ENCODE measurements at regions of chr12 and their contacts with region 1.

Region 1: DNA sequence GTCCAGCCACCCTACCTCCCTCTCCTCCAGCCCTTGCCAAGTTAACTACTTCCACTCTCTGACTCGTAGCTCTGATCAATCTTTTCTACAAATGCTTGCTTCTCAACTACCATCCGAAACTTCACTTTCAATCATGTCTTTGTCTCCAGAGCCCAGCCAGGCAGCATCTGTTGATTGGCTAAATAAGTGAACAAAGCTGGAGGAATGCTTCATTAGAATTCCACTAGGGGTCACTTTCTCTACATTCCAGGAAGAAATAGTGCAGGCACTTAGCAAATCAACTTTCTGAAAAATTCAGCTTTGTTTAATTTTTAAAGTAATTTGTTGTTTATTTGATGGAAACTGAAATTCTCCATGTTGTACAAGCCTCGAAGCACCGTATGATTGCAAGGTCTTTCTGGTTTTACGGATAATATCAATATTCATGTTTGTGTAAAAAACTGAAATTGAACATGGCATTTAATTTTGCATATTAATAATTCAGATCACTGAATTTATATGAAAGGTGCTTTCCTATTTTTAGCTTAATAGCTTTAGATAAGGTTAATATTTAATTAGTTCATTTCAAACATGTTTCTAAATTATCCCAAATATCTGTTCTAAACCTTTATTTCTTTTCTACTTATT is 32.4 kb upstream of the HELB start:
- DNase-seq: no peak
- H3K4me3 ChIP-seq: no peak overlapping the region
- H3K27ac ChIP-seq: no peak overlapping the region
- H3K4me1 ChIP-seq: no peaks in the 10 kb centered on the region
- H3K27me3 ChIP-seq: no peaks in the 10 kb centered on the region
- CTCF ChIP-seq: peak; percentile 52 to 66 (median 60)
- EP300 ChIP-seq: no peak
- POLR2A ChIP-seq: no peak

Region 2: GRCh38 chr12:66417217-66417616 is 147.3 kb after region 1 on chr12:
- in situ Hi-C with region 1: loop called in 1 of 4 experiments (anchors 10 kb)
- intact Hi-C with region 1: no loop called
- DNase-seq: no peak
- H3K4me3 ChIP-seq: no peak overlapping the region
- H3K27ac ChIP-seq: no peak overlapping the region
- H3K4me1 ChIP-seq: no peaks in the 10 kb centered on the region
- H3K27me3 ChIP-seq: no peaks in the 10 kb centered on the region
- CTCF ChIP-seq: no peak
- EP300 ChIP-seq: no peak
- POLR2A ChIP-seq: no peak

Region 3: GRCh38 chr12:66693901-66694675 is 424.2 kb after region 1 on chr12:
- in situ Hi-C with region 1: loop called in 3 of 4 experiments (anchors 25 kb)
- intact Hi-C with region 1: no loop called
- DNase-seq: no peak
- H3K4me3 ChIP-seq: no peak overlapping the region
- H3K27ac ChIP-seq: no peak overlapping the region
- H3K4me1 ChIP-seq: no peaks in the 10 kb centered on the region
- H3K27me3 ChIP-seq: no peaks in the 10 kb centered on the region
- CTCF ChIP-seq: peak; percentile 44 to 54 (median 47)
- EP300 ChIP-seq: no peak
- POLR2A ChIP-seq: no peak

Region 4: GRCh38 chr12:66708704-66709456 is 439.0 kb after region 1 on chr12:
- in situ Hi-C with region 1: loop called in 1 of 4 experiments (anchors 10 kb)
- intact Hi-C with region 1: no loop called
- DNase-seq: no peak
- H3K4me3 ChIP-seq: no peak overlapping the region
- H3K27ac ChIP-seq: no peak overlapping the region
- H3K4me1 ChIP-seq: no peaks in the 10 kb centered on the region
- H3K27me3 ChIP-seq: no peaks in the 10 kb centered on the region
- CTCF ChIP-seq: peak; percentile 17 to 36 (median 22)
- EP300 ChIP-seq: no peak
- POLR2A ChIP-seq: no peak

Region 5: DNA sequence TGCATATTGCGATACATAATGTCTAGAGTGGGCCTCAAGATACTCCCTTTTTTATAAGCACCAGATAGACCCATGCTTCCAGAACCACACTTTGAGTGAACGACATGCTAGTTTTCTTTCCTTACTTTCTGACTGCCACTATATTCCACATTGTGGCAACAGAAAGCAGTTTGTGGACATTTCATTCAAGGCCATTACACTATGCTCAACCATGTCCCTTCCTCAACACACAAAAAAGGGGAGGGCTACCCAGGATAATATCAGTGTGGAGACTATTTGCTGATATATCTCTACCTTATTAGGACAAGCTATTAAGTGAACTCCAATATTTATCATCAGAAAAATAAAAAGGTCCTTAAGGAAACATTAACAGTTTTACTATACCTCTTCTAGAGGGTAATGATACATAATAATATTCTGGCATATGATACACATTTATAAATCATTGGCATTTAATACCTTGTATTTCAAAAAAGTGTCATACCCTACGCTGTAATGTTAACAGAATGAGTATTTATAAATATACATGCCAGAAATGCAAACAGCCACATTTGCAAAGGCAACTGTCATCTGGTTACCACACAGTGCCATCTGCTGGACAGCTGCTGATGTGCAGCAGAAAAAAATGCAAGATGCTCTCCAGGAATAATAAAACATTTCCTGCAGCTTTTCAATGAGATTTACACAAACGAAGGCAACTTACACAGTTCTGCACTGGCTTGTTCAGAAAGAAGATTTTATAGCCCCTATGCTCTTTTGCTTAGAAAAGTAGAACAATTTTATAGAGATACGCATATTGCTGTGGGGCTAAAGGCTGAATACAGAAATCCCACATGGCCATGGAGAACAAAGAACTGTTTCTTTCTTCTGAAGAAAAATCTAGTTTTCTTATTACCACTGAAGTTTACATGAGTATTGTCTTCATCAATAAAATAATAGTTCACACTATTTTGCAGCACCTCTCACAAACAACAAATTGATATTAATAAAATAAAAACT is 591.2 kb after region 1 on chr12:
- in situ Hi-C with region 1: loop called in 2 of 4 experiments (anchors 25 kb)
- intact Hi-C with region 1: no loop called
- DNase-seq: peak; percentile 63
- H3K4me3 ChIP-seq: no peak overlapping the region
- H3K27ac ChIP-seq: no peak overlapping the region
- H3K4me1 ChIP-seq: no peaks in the 10 kb centered on the region
- H3K27me3 ChIP-seq: no peaks in the 10 kb centered on the region
- CTCF ChIP-seq: peak; percentile 64 to 91 (median 85)
- EP300 ChIP-seq: no peak
- POLR2A ChIP-seq: no peak

Measured in transverse colon (tissue), 4 donors.